ENCODE measurements at regions of chr7 and their contacts with region 1.

Region 1: DNA sequence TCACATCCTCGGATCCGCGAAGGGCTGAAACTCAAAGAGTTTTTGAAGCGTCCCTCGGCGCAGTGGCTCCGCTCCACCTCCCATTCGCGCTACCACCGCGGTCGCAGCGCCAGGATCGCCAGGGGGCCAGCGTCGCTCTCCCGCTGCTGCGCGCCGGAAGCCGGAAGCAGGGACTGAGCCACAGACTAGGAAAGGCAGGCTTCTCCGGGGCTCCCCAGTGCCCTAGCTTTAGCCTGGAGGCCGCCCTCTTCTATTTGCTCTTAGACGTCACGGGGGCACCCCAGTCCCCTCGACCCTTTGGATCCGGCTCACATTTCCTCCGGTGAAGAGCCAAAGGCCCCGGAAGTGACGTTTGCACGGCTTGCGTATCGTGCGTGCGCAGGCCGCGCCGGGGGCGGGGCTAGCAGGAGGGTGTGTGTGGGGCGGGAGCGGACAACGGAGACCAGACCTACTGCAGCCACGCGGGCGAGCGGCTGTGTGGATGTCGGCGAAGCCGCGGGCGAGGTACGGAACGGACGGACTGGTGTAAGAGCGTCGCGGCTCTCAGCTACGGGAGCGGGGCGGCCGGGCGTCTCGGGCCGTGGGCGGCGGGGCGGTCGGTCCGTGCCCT is 25.5 kb downstream of the KCTD7 start:
- DNase-seq: peak; percentile 92 to 99
- H3K4me3 ChIP-seq: peak overlapping the region; percentile 87 to 97
- H3K27ac ChIP-seq: peak overlapping the region; percentile 98 to 99
- H3K4me1 ChIP-seq: peaks cover 0 to 13% of the 10 kb centered on the region in 2 donors
- H3K27me3 ChIP-seq: no peaks in the 10 kb centered on the region
- CTCF ChIP-seq: peak in 2 of 3 experiments; percentile 14 to 30

Region 2: GRCh38 chr7:66493235-66494181 is 160.7 kb before region 1 on chr7:
- intact Hi-C with region 1: loop called (anchors 10 kb)
- DNase-seq: peak; percentile 89 to 99
- H3K4me3 ChIP-seq: peak overlapping the region; percentile 61 to 76
- H3K27ac ChIP-seq: peak overlapping the region; percentile 89 to 94
- H3K4me1 ChIP-seq: peaks cover 0 to 6% of the 10 kb centered on the region in 2 donors
- H3K27me3 ChIP-seq: no peaks in the 10 kb centered on the region
- CTCF ChIP-seq: peak; percentile 29 to 54 (median 38)

Region 3: GRCh38 chr7:66591799-66592596 is 62.2 kb before region 1 on chr7:
- intact Hi-C with region 1: loop called (anchors 2 kb)
- DNase-seq: peak; percentile 67 to 95
- H3K4me3 ChIP-seq: peak overlapping the region; percentile 76 to 95
- H3K27ac ChIP-seq: peak overlapping the region; percentile 94 to 99
- H3K4me1 ChIP-seq: peaks cover 0 to 15% of the 10 kb centered on the region in 2 donors
- H3K27me3 ChIP-seq: no peaks in the 10 kb centered on the region
- CTCF ChIP-seq: no peak

Region 4: GRCh38 chr7:66681491-66682349 is 27.5 kb after region 1 on chr7:
- intact Hi-C with region 1: loop called (anchors 1 kb)
- DNase-seq: peak; percentile 88 to 99
- H3K4me3 ChIP-seq: peak overlapping the region; percentile 68 to 87
- H3K27ac ChIP-seq: peak overlapping the region; percentile 99 to 100
- H3K4me1 ChIP-seq: peaks cover 4 to 11% of the 10 kb centered on the region in 2 donors
- H3K27me3 ChIP-seq: no peaks in the 10 kb centered on the region
- CTCF ChIP-seq: no peak

Region 5: DNA sequence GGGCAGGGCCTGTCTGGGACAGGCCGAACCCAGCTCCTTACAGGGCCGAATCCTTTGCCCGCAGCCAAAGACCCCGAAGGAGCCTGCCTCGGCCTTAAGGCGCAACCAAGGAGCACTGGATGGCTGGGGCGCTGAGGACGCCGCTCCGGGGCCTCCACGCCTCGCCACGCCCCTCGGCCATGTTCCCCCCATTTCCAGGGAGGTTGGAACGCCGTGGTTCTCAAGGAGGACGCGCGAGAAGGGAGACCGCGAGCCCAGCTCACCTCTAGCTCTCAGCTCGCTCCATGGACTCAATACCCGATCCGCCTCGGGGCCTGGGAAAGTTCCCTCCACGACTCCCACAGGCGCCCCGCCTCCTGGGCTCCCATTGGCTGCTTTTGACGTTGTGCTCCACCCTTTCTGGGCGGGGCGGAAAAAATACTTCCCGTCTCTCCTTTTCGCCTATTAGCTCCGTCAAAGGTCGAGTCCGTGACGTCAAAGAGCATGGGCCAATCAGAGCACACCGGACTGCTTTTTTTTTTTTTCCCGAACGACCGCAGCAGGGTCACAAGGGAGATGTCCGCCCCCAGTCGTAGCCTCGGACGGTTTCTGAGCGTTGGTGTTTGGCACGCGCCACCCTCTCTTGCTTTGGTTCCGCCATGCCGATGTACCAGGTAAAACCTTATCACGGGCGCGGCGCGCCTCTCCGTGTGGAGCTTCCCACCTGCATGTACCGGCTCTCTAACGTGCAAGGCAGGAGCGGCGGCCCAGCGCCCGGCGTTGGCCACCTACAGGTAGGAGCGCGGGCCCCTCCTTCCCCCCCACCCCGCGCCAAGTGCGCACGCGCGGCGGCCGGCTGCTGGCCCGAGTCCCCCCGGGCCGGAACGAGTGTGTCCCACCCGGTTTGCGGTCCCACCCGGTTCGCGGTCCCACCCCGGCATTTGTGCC is 648.1 kb after region 1 on chr7:
- intact Hi-C with region 1: loop called (anchors 10 kb)
- DNase-seq: peak; percentile 97 to 100
- H3K4me3 ChIP-seq: peak overlapping the region; percentile 62 to 79
- H3K27ac ChIP-seq: peak overlapping the region; percentile 87 to 90
- H3K4me1 ChIP-seq: peaks cover 0 to 10% of the 10 kb centered on the region in 2 donors
- H3K27me3 ChIP-seq: no peaks in the 10 kb centered on the region
- CTCF ChIP-seq: peak; percentile 20 to 45 (median 41)